ENCODE measurements at regions of chrX and their contacts with region 1.

Region 1: DNA sequence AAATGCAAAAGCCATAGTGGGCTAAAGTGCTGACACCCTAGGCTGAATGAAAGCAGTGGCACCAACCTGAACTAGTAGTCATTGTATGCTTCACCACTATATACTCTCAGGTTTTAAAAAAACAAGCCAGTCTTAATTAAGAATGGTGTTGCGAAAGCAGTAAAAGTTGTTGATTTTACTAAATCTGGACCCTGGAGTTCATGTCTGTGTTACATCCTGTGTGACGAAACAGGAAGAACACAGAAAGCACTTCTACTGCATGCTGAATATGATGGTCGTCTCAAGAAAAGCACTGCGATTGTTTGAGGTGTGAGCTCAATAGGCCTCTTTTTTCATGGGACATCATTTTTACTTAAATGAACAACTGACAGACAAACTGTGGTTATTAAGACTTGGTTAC is 24.2 kb upstream of the GDPD2 start:
- DNase-seq: no peak
- ATAC-seq: no peak

Region 2: GRCh38 chrX:70424801-70425200 is 25.9 kb after region 1 on chrX:
- intact Hi-C with region 1: loop called (anchors 5 kb)
- DNase-seq: no peak
- ATAC-seq: no peak

Region 3: GRCh38 chrX:70577442-70577841 is 178.5 kb after region 1 on chrX:
- intact Hi-C with region 1: loop called (anchors 5 kb)
- DNase-seq: no peak
- ATAC-seq: no peak

Measured in sciatic nerve (tissue), 2 donors.